ENCODE measurements at regions of chr17 and their contacts with region 1.

Region 1: DNA sequence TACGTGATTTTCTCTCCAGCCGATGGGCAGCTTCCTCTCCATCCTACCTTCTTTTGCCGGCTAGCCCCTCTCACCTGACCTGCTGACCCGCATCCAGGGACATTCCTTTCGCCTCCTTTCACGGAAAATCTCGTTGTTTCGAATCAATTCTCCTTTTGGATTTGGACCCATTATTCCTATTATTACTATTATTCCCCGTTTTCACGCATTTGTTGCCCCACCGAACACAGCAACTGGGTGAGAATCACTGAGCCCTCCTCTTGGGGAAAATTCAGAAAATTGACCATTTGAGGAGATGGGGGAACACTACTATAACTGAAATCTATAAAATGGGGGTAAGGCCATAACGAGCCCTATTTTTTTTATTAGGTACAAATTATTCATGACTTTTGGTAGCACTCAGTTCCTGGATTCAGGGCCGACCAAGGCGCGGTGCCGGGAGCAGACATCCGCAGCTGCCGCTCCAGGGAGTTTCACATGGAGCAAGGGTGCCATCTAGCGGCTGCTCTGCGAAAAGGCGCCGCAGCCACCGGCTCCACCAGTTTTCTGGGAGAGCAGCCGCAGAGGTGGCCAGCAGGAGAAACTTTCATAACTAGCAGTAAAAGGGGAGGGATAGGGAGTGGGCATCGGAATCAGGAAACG is 3.3 kb upstream of the HOXB8 start:
- DNase-seq: peak; percentile 93

Region 2: DNA sequence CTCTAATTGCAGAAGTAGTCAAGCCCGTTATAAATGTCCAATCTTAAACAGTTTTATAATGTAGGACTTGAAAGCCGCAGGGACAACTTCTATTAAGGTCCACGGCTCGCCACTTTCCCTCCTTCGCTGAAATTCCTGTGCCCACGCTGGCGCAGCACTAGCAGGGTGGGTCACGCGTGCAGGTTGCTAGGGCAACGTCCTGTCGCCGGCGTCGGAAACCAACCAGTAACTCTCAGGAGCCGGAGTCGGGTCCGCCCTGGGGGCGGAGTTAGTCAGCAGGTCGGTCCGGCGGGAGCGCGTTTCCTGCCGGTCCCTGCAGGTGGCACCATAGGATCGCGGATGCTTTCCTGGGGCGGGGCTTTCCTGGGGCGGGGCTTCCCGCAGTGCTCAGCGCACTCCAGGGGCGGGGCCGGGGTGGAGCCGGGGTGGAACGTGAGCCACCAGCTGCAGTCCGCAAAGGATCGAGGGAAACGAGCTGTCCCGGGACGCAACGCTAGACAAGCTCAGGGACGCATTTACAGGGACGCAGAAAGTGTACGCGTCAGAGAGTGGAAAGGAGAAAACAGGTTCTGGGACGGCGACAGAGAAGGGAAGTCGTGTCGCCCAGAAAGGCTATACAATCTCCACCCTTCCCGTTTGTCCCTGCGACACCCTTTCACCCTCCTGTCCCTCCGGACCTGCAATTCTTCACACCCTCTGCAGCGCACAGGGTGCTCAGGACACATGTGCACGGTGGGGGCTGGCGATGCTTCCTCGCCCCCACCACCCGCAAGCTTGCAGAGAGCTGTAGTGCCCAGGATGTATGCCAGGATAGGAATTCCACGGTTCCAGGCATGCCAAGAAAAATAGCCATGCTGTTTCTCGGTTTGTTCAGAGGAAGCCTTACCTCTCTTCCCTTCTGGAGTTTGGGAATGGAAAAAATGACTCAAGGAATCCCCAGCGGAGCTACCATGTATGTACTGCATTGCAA is 593.2 kb before region 1 on chr17:
- intact Hi-C with region 1: loop called (anchors 10 kb)
- DNase-seq: peak; percentile 99

Region 3: GRCh38 chr17:48153691-48154358 is 464.6 kb before region 1 on chr17:
- intact Hi-C with region 1: loop called (anchors 5 kb)
- DNase-seq: no peak

Region 4: DNA sequence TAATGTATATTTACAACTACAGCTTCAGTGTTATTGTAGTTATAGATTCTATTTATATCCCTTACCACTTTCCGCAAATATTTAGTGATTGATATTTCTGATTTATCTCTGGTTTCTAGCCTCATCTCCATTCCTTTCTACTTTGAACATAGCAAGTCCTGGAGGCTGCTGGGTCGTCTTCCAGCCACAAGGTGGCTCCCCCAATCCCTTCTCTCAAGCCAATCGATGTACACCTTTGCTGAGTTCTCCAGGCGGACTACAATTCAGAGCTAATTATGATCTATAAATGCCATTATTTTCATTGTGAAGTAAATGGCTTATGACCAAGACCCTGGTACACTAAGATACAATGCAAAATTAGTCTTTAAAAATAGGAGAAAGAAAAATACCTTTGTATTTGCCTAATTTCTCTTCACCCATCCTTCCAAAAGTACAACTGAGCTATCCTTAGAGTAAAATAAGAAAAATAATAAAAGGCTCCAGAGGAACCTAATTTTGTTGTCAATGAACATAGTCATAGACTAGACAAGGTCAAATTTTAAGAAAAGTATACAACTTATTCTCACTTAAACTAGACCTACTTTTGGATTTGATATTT is 310.5 kb before region 1 on chr17:
- intact Hi-C with region 1: loop called (anchors 5 kb)
- DNase-seq: no peak

Region 5: DNA sequence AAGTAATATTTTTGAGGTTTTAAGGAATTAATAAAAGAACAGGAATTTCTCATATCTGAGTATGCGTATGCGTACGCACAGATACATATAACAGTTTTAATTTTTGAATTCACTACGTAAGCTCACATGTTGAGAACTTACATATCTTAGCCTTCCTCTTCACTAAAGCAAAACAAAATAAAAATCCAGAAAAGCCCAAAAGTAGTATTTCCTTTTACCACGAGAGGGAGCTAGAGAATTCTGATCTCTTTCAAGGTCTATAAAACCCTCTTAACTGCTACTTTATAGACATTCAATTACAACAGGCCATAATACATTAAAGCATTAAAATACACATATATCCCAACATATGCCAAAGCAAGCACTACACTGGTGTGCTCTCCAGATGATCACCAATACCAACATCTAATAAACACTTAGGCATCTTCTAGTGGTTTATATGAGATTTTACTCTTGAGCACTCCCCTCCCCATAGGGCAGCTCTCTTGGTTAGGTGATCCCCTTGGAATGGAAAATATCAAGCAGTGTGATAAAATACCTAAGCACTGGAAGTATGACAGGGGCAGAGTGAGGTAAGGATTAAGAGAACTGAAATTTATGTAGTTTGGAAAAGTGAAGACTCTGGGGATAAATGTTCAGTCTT is 282.4 kb before region 1 on chr17:
- intact Hi-C with region 1: loop called (anchors 5 kb)
- DNase-seq: no peak

Region 6: DNA sequence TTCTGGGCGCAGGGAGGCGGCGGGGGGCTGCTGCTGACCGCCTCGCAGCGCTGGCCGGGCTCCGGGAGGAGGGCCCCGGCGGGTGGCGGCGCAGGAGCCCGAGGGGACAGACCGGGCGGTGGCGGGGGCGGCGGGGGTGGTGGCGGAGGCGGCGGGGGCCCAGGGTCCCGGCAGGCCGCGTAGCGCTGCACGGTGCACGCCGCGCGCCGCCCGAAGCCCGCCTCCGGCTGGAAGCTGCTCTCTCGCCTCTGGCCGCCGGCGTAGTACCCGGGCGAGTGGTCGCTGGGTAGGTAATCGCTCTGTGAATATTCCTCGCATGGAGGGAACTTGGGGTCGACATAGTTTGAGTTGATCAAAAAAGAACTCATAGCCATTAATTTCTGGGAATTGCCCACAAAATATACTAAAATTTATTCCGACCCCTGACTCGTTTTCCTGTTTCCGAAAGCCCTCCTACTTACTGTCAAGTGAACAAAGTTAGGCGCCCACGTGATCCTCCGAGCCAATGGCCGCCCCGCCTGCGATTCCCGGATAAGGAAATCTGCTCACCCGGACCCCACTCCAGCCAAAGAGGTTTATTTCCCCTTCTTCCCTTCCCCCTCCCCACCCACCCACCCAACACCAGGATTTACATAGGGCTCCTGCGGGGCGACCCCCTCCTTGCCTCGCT is 40.3 kb before region 1 on chr17 and contains the start of gene HOXB4:
- intact Hi-C with region 1: no loop called
- DNase-seq: peak; percentile 88
- total RNA-seq, gene HOXB4: 1.6 TPM

Region 7: GRCh38 chr17:48630925-48631692 is 12.7 kb after region 1 on chr17:
- intact Hi-C with region 1: no loop called
- DNase-seq: no peak

Region 8: GRCh38 chr17:48841395-48841831 is 223.0 kb after region 1 on chr17:
- intact Hi-C with region 1: no loop called
- DNase-seq: no peak

Region 9: GRCh38 chr17:48997083-48997826 is 378.9 kb after region 1 on chr17 and contains the start of gene IGF2BP1:
- intact Hi-C with region 1: loop called (anchors 10 kb)
- DNase-seq: no peak
- total RNA-seq, gene IGF2BP1: not detected

Measured in cardiac septum (tissue), 1 donor.